GM13976 (cell line): ENCODE measurements at regions of chr12 and their contacts with region 1.

Region 1: DNA sequence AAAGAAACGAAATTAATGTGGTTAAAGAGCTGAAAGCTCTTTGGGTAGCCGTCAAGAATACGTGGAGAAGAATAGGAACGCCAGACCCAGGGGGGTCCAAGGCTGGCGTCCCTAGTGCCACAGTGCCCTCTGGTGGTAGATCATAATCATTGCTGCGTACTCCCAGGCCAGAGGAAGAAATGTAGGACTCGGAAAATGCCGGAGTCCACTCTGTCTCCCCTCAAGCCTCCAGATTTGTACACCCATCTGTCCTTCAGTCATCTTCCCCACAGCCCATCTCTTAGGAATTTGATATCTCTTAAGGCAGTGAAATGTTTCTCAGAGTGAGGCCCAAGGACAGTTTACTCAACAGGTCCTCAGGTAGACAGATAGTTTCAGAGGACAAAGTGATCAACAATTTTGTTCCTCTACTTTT is 25.4 kb upstream of the PLEKHG6 start:
- DNase-seq: peak; percentile 87
- CTCF ChIP-seq: peak; percentile 84

Region 2: GRCh38 chr12:5713599-5714081 is 571.4 kb before region 1 on chr12:
- in situ Hi-C with region 1: no loop called
- DNase-seq: no peak
- CTCF ChIP-seq: no peak

Region 3: DNA sequence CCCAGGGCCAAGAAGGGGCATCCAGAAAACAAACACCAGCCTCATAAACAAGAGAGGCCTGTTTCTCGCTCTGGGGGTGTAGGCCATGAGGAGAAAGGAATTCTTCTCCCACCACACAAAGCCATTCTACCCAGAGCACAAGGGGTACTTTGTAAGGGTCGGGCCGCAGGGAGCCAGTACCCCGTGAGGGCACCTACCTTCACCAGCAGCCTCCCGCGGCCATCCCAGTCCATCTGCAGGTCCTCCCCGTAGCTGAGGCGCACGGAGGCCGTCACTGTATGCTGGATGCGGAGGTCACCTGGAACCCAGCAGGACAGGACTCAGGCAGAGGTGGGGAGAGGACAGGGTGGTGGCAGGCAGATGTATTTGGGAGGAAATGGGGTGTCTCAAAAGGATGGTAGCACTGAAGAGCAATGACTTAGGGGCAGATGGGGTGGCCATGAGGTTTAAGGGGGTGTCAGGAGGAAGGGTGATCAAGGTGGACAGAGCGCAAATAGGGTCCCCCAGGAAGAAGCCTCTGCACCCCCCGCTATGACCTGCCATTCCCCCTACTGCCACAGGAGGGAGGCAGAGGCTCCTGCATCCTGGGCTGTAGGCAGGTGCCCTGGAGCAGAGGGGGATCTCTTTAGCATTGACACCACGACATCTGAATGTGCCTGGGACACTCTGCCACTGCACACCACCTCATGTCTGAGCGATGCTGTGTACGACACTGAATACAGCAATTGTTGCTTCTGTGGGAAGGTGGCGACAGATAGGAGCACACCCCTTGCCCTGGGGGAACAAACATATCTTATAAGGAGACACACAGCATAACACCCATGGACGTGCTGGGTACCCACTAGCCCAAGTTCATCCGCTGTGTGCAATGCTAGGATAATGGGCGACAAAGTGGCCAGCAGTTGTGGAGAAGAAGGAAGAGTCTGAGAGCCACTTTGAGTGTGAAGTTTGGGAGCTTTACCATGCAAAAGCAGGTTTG is 222.0 kb before region 1 on chr12:
- in situ Hi-C with region 1: loop called (anchors 5 kb)
- DNase-seq: peak; percentile 87
- CTCF ChIP-seq: peak; percentile 87

Region 4: DNA sequence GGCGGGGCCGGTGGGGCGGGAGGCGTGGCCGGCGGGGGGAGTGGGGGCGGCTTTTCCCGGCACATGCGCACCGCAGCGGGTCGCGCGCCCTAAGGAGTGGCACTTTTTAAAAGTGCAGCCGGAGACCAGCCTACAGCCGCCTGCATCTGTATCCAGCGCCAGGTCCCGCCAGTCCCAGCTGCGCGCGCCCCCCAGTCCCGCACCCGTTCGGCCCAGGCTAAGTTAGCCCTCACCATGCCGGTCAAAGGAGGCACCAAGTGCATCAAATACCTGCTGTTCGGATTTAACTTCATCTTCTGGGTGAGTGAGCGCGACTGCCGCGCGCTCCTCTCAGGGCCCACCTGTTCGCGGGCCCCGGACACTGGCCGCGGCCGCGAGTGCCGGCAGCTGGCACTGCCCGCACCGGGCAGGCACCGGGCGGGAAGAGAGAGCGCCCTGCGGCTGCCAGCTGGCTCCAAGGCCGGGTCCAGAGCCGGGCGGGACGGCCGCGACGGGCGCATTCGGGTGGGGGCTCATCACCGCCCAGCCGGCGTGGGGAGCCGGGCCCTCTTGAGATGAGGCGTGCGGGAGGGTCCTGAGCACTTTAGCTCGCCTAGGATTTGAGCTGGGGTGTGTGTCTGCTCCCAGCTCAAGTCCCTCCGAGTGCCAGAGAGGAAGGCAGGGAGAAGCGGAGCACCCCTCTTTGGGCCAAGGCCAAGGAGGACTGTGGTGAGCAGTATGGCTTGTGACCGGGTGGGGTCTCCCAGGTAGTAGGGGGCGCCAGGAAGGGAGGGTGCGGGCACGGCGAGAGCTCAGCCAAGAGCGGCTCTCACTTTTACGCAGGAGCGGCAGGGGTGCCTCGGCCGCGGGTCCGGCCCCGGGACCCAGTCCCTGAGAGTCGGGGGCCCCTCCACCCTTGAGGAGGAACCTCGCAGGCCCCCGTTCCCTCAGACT is 84.5 kb before region 1 on chr12 and contains the start of gene CD9:
- in situ Hi-C with region 1: loop called (anchors 10 kb)
- DNase-seq: peak; percentile 65
- CTCF ChIP-seq: no peak